Activated CD8-positive, alpha-beta T cell treated with anti-CD3 and anti-CD28 coated beads for 36 hours (primary cell): ENCODE measurements at regions of chr4 and their contacts with region 1.

Region 1: GRCh38 chr4:6180841-6181631 is 19.3 kb downstream of the JAKMIP1 start:
- DNase-seq: peak; percentile 83
- ATAC-seq: peak; percentile 83
- H3K4me3 Mint-ChIP-seq: no peak overlapping the region
- H3K27ac Mint-ChIP-seq: peak overlapping the region; percentile 94
- H3K4me1 Mint-ChIP-seq: peaks cover 63% of the 10 kb centered on the region
- H3K27me3 Mint-ChIP-seq: peaks cover 2% of the 10 kb centered on the region
- CTCF ChIP-seq: no peak

Region 2: GRCh38 chr4:5970776-5971431 is 210.1 kb before region 1 on chr4:
- CTCF ChIA-PET with region 1: no interaction called
- POLR2A ChIA-PET with region 1: no interaction called
- intact Hi-C with region 1: no loop called
- DNase-seq: no peak
- ATAC-seq: no peak
- H3K4me3 Mint-ChIP-seq: no peak overlapping the region
- H3K27ac Mint-ChIP-seq: no peak overlapping the region
- H3K4me1 Mint-ChIP-seq: no peaks in the 10 kb centered on the region
- H3K27me3 Mint-ChIP-seq: peaks cover 3% of the 10 kb centered on the region
- CTCF ChIP-seq: no peak

Region 3: DNA sequence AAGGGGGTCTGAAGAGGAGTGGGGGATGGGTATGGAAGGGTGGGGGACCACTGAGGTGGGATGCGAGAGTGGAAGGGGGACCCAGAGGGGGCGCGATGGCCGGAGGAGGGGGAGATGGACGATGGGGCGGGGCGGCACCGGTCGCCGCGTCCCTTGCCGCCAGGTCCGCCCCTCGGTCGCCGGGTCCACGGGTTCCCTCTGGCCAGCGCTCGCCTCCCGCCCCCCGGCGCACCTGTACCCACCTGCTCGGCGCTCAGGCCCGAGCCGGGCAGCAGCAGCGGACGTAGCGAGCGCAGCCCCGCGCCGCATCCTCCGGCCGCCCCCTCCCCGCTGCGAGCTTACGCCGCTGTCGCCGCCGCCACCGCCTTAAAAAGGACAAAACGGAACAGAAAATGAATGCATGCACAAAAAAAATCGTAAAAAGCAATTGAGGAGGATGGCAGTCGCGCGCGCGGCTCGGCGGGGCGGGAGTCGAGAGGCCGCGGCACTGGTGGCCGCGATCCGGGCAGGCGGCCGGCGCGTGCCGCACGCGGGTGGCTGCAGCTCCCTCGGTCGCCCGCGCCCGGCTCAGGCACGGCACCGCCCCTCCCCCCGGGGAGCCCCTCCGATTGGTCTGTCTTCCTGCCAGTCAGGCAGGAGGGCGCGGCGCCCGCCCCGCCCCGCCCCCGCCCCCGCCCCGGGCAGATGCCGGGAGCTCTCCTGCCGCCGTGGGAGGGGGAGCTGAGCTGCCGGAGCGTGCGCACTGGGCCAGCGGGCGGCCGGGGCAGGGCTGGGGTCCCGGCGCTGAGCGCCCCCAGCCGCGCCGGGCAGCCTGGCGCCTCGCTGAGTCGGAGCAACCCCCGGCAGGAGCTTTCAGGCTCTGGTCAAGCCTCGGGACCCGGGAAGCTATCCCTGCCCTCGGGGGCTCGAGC is 19.2 kb after region 1 on chr4 and contains the start of gene JAKMIP1:
- CTCF ChIA-PET with region 1: interaction called, 5 read pairs
- POLR2A ChIA-PET with region 1: interaction called, 33 read pairs
- intact Hi-C with region 1: no loop called
- DNase-seq: peak; percentile 86
- ATAC-seq: peak; percentile 75
- H3K4me3 Mint-ChIP-seq: peak within 1 kb of the TSS; percentile 72
- H3K27ac Mint-ChIP-seq: peak within 1 kb of the TSS; percentile 40
- H3K4me1 Mint-ChIP-seq: peaks cover 30% of the 10 kb centered on the region
- H3K27me3 Mint-ChIP-seq: peaks cover 35% of the 10 kb centered on the region
- CTCF ChIP-seq: no peak
- total RNA-seq, gene JAKMIP1: 5.6 to 6.3 TPM